H1 (cell line): ENCODE measurements at regions of chr3 and their contacts with region 1.

Region 1: GRCh38 chr3:53255775-53256703 is at the start of gene TKT:
- DNase-seq: peak; percentile 47 to 80
- H3K4me3 ChIP-seq: peak within 1 kb of the TSS; percentile 98 to 100 (median 98)
- H3K27ac ChIP-seq: peak within 1 kb of the TSS; percentile 72
- H3K4me1 ChIP-seq: peaks cover 13 to 37% (median 27%) of the 10 kb centered on the region in 4 experiments
- H3K27me3 ChIP-seq: no peaks in the 10 kb centered on the region
- CTCF ChIP-seq: no peak
- EP300 ChIP-seq: no peak
- POLR2A ChIP-seq: peak in 1 of 2 experiments; percentile 71; a peak in 2 of 3 replicates
- RAD21 ChIP-seq: no peak
- total RNA-seq, gene TKT: 975 and 986 TPM in 2 replicates

Region 2: GRCh38 chr3:53140847-53141845 is 114.9 kb before region 1 on chr3:
- CTCF ChIA-PET with region 1: no interaction called
- POLR2A ChIA-PET with region 1: no interaction called
- DNase-seq: no peak
- H3K4me3 ChIP-seq: no peak overlapping the region
- H3K27ac ChIP-seq: no peak overlapping the region
- H3K4me1 ChIP-seq: no peaks in the 10 kb centered on the region; a peak in 1 of 7 replicates
- H3K27me3 ChIP-seq: no peaks in the 10 kb centered on the region
- CTCF ChIP-seq: no peak
- EP300 ChIP-seq: no peak
- POLR2A ChIP-seq: no peak
- RAD21 ChIP-seq: no peak

Region 3: DNA sequence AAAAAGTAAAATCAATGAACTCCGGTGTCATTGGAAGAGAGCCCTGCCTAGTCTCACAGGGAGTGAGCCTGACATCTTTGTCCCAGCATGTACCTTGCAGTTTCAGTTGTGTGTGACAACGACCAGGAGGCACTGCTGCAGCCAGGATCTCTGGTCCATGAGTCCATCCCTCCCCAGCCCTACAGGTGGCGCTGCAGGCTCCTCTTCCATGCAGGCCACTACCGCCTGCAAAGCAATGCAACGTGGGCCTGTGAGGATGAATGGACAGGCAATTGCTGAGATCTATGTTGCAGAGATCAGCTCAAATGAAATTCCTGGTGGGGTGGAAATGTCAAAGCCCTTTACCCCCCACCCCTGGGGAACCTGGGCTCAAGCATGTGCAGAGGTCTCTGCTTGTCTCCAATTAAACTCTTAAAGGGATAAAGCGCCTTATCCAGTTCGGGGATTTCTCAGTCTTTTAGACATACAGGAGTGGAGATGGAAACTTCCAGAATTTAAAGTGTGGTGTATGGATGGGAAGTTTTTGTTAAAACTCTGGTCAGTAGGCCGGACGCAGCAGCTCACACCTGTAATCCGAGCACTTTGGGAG is 36.0 kb before region 1 on chr3:
- CTCF ChIA-PET with region 1: interaction called, 64 read pairs
- POLR2A ChIA-PET with region 1: interaction called, 449 read pairs
- DNase-seq: peak; percentile 78 to 97
- H3K4me3 ChIP-seq: no peak overlapping the region
- H3K27ac ChIP-seq: no peak overlapping the region
- H3K4me1 ChIP-seq: peaks cover 0 to 2% (median 0%) of the 10 kb centered on the region in 4 experiments; a peak in 1 of 7 replicates
- H3K27me3 ChIP-seq: no peaks in the 10 kb centered on the region
- CTCF ChIP-seq: peak in 2 of 3 experiments; percentile 97 to 98; a peak in 3 of 4 replicates
- EP300 ChIP-seq: no peak
- POLR2A ChIP-seq: peak in 1 of 2 experiments; percentile 27; a peak in 1 of 3 replicates
- RAD21 ChIP-seq: peak; percentile 85 to 89

Region 4: GRCh38 chr3:53236112-53236841 is 19.8 kb before region 1 on chr3:
- CTCF ChIA-PET with region 1: interaction called, 13 read pairs
- POLR2A ChIA-PET with region 1: interaction called, 449 read pairs
- DNase-seq: no peak
- H3K4me3 ChIP-seq: no peak overlapping the region
- H3K27ac ChIP-seq: peak overlapping the region; percentile 71
- H3K4me1 ChIP-seq: peaks cover 0 to 7% (median 3%) of the 10 kb centered on the region in 4 experiments; a peak in 5 of 7 replicates
- H3K27me3 ChIP-seq: no peaks in the 10 kb centered on the region
- CTCF ChIP-seq: no peak
- EP300 ChIP-seq: no peak
- POLR2A ChIP-seq: peak in 1 of 2 experiments; percentile 16; a peak in 1 of 3 replicates
- RAD21 ChIP-seq: no peak

Region 5: DNA sequence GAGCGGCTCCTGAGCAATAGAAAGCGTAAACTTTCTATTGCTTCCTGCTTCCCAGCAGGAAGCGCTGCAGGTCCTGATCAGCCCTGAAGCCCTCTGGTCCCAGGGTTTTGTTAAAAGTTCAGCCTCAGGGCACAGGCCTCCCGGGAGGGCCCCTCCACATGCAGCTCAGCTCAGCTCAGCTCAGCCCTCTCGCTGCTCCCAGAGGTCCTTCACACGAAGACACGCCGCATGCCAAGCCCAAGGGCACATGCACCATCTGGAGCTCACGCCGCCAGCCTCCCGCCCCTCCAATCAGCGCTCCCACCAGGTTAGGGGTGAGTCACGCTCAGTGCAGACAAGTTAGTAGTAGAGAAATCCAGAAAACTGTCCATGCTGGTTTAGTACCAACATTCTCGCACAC is 12.9 kb before region 1 on chr3:
- CTCF ChIA-PET with region 1: interaction called, 13 read pairs
- POLR2A ChIA-PET with region 1: interaction called, 449 read pairs
- DNase-seq: no peak
- H3K4me3 ChIP-seq: no peak overlapping the region
- H3K27ac ChIP-seq: no peak overlapping the region
- H3K4me1 ChIP-seq: peaks cover 4 to 21% (median 16%) of the 10 kb centered on the region in 4 experiments
- H3K27me3 ChIP-seq: no peaks in the 10 kb centered on the region
- CTCF ChIP-seq: peak in 1 of 3 experiments; percentile 10; a peak in 2 of 4 replicates
- EP300 ChIP-seq: no peak
- POLR2A ChIP-seq: no peak
- RAD21 ChIP-seq: peak; percentile 28 to 41; a peak in 2 of 4 replicates

Region 6: GRCh38 chr3:53269888-53270880 is 14.1 kb after region 1 on chr3:
- CTCF ChIA-PET with region 1: interaction called, 6 read pairs
- POLR2A ChIA-PET with region 1: interaction called, 52 read pairs
- DNase-seq: peak; percentile 74 to 85
- H3K4me3 ChIP-seq: no peak overlapping the region
- H3K27ac ChIP-seq: peak overlapping the region; percentile 65; the same call in 1 of the 2 replicates
- H3K4me1 ChIP-seq: peaks cover 0 to 9% (median 5%) of the 10 kb centered on the region in 4 experiments; a peak in 5 of 7 replicates
- H3K27me3 ChIP-seq: no peaks in the 10 kb centered on the region; a peak in 2 of 7 replicates
- CTCF ChIP-seq: no peak
- EP300 ChIP-seq: peak in 1 of 2 experiments; percentile 63; a peak in 1 of 3 replicates
- POLR2A ChIP-seq: peak in 1 of 2 experiments; percentile 38; a peak in 1 of 3 replicates
- RAD21 ChIP-seq: no peak; a peak in 1 of 4 replicates

Region 7: GRCh38 chr3:53287131-53287629 is 31.1 kb after region 1 on chr3:
- CTCF ChIA-PET with region 1: interaction called, 4 read pairs
- POLR2A ChIA-PET with region 1: interaction called, 36 read pairs
- DNase-seq: no peak
- H3K4me3 ChIP-seq: peak overlapping the region in 3 of 4 experiments; percentile 12 to 42 (median 24); a peak in 5 of 8 replicates
- H3K27ac ChIP-seq: peak overlapping the region; percentile 38; the same call in 1 of the 2 replicates
- H3K4me1 ChIP-seq: peaks cover 9 to 21% (median 13%) of the 10 kb centered on the region in 4 experiments; a peak in 6 of 7 replicates
- H3K27me3 ChIP-seq: no peaks in the 10 kb centered on the region
- CTCF ChIP-seq: no peak
- EP300 ChIP-seq: no peak
- POLR2A ChIP-seq: no peak
- RAD21 ChIP-seq: no peak

Region 8: DNA sequence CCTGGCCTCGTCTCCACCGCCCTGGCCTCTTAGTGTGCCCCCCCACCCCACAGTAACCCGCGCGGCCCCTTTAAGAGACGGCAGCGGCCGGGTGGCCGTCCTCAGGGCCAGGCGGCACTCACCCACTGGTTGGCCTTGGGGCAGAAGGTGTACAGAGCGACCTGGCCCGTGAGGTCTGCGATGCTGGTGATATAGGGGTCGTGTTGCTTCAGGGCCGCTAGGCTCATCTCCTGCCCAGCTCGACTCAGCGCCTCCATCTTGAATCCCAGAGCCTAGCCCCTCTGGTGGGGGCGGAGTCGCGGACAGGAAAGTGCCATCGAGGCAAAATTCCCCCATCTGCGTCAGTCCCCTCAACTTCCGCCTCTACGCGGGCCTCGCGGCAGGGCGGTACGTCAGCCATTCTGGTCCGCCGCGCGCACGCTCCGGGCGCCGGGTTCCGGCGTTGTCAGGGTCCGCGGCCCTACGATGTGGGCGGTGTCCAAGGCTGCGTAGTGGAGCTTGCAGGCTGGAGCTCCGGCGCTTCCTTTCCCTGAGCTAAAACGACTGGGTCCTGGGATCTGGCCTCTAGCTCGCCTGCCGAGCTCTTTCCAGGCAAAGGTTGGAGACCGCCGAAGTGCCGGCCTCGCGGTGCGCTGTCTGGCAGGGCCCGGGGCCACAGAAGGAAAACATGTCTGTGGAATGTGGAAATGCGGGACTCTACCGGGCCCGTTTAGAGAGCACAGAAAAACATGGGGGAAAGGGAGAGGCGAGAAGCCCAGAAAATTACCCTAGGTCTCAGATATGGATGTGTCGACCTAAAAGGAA is 91.4 kb after region 1 on chr3 and contains the start of gene DCP1A:
- CTCF ChIA-PET with region 1: interaction called, 3 read pairs
- POLR2A ChIA-PET with region 1: interaction called, 10 read pairs
- DNase-seq: peak; percentile 91 to 98
- H3K4me3 ChIP-seq: peak within 1 kb of the TSS; percentile 78 to 99 (median 92)
- H3K27ac ChIP-seq: peak within 1 kb of the TSS; percentile 91
- H3K4me1 ChIP-seq: peaks cover 0 to 2% (median 0%) of the 10 kb centered on the region in 4 experiments; a peak in 2 of 7 replicates
- H3K27me3 ChIP-seq: no peaks in the 10 kb centered on the region
- CTCF ChIP-seq: no peak
- EP300 ChIP-seq: peak in 1 of 2 experiments; percentile 93; a peak in 2 of 3 replicates
- POLR2A ChIP-seq: peak; percentile 90 to 95; a peak in 2 of 3 replicates
- RAD21 ChIP-seq: peak in 1 of 2 experiments; percentile 13; a peak in 2 of 4 replicates
- total RNA-seq, gene DCP1A: 15.1 and 15.9 TPM in 2 replicates